Caco-2 (cell line): ENCODE measurements at regions of chr17 and their contacts with region 1.

Region 1: GRCh38 chr17:78497115-78497540 is 80.1 kb downstream of the DNAH17 start:
- DNase-seq: peak; percentile 87 to 88
- H3K4me3 ChIP-seq: no peak overlapping the region
- H3K4me3 Mint-ChIP-seq: no peak overlapping the region
- H3K27ac Mint-ChIP-seq: no peak overlapping the region
- H3K4me1 ChIP-seq: no peaks in the 10 kb centered on the region
- H3K4me1 Mint-ChIP-seq: no peaks in the 10 kb centered on the region
- H3K27me3 ChIP-seq: no peaks in the 10 kb centered on the region
- H3K27me3 Mint-ChIP-seq: no peaks in the 10 kb centered on the region
- CTCF ChIP-seq: peak; percentile 85 to 88

Region 2: GRCh38 chr17:78557598-78558039 is 60.5 kb after region 1 on chr17:
- CTCF ChIA-PET with region 1: interaction called, 4 read pairs
- POLR2A ChIA-PET with region 1: no interaction called
- intact Hi-C with region 1: loop called (anchors 5 kb)
- DNase-seq: no peak
- H3K4me3 ChIP-seq: no peak overlapping the region
- H3K4me3 Mint-ChIP-seq: no peak overlapping the region
- H3K27ac Mint-ChIP-seq: no peak overlapping the region
- H3K4me1 ChIP-seq: no peaks in the 10 kb centered on the region
- H3K4me1 Mint-ChIP-seq: no peaks in the 10 kb centered on the region
- H3K27me3 ChIP-seq: no peaks in the 10 kb centered on the region
- H3K27me3 Mint-ChIP-seq: no peaks in the 10 kb centered on the region
- CTCF ChIP-seq: no peak

Region 3: GRCh38 chr17:78745407-78746088 is 248.4 kb after region 1 on chr17:
- CTCF ChIA-PET with region 1: interaction called, 4 read pairs
- POLR2A ChIA-PET with region 1: no interaction called
- intact Hi-C with region 1: loop called (anchors 1 kb)
- DNase-seq: peak in 1 of 2 experiments; percentile 53
- H3K4me3 ChIP-seq: no peak overlapping the region
- H3K4me3 Mint-ChIP-seq: no peak overlapping the region
- H3K27ac Mint-ChIP-seq: no peak overlapping the region
- H3K4me1 ChIP-seq: no peaks in the 10 kb centered on the region
- H3K4me1 Mint-ChIP-seq: peaks cover 8% of the 10 kb centered on the region
- H3K27me3 ChIP-seq: no peaks in the 10 kb centered on the region
- H3K27me3 Mint-ChIP-seq: no peaks in the 10 kb centered on the region
- CTCF ChIP-seq: peak; percentile 50 to 69

Region 4: DNA sequence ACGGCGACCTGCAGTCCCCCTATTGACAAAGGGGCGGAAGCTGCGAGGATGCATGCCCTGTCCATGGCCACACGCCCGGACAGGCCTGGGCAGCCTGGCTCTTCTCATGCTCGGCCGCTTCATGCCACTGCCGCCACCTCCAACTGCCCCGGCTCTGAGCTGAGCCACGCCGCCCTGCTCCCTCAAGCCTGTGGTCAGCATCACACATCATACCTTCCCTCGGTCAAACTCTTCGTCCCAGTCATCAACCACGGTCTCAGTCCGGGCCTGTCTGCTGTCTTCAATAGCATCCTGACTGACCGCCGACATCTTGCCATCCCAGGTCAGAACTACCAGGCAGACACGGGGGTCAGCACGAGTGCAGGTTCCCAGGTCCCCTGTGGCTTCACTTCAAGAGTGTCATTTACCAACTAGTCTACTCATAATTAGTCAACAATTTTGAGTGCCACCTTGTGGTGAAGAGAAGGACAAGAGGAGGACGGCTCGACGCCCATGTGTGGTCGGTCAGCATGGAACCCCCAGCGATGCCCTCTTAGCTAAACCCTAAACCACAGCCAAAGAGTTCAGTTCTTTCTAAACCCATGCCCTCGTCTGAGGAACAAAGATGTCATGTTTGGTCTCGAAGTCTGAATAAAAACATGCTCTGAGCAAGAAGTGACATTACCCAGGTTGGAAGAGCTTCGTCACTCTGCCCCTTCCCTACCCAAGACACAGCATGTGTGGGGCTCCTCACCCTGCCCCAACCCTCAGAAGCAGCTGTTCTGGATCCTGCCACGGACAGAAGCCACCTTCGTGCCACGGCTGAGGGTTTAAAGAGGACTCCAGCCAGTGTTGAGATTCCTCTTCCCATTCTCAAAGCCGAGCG is 301.8 kb after region 1 on chr17:
- CTCF ChIA-PET with region 1: interaction called, 4 read pairs
- POLR2A ChIA-PET with region 1: no interaction called
- intact Hi-C with region 1: loop called (anchors 1 kb)
- DNase-seq: peak in 1 of 2 experiments; percentile 26
- H3K4me3 ChIP-seq: no peak overlapping the region
- H3K4me3 Mint-ChIP-seq: no peak overlapping the region
- H3K27ac Mint-ChIP-seq: peak overlapping the region; percentile 17
- H3K4me1 ChIP-seq: no peaks in the 10 kb centered on the region
- H3K4me1 Mint-ChIP-seq: no peaks in the 10 kb centered on the region
- H3K27me3 ChIP-seq: no peaks in the 10 kb centered on the region
- H3K27me3 Mint-ChIP-seq: no peaks in the 10 kb centered on the region
- CTCF ChIP-seq: peak; percentile 29 to 32